OCI-LY7 (cell line): ENCODE measurements at regions of chr7 and their contacts with region 1.

Region 1: DNA sequence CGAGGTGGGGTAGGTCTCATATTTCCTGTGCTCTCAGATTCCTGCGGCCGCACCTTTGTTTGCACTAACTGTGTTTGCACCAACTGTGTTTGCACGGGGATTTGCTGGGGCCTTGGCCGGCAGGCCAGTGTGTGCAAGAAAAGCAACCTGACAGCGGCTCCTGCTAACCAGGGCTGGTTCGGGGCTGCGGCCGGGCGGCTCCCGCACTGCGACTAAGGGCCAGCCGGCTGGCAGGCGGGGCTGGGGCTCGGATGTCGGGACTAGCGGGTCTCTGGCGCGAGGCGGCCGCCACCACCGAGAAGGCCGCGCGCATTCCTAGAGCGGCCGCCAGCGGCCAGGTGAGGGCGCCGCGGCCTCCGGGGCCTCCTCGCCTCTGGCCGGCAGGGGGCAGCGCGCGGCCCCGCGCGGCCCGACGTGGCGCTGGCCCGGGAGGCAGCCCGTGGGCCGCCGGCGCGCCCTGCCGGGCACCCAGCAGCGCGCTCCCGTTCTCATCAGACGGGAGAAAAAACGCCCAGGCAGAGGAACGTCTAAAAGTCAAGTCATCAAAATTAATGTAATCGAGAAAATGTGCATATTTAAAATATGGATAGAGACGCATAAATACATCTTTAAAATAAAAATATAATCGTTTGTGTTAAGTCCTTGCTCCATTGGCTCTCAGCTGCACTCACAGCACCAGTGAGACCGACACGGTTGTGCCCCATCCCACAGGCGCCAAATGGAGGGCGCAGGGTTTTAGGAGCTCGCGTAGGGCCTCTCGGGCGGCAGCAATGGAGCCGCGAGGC is 38.5 kb downstream of the ZNF777 start:
- DNase-seq: peak; percentile 84
- H3K4me3 ChIP-seq: peak overlapping the region; percentile 58
- H3K27ac ChIP-seq: no peak overlapping the region
- H3K4me1 ChIP-seq: peaks cover 5% of the 10 kb centered on the region
- CTCF ChIP-seq: peak; percentile 62

Region 2: GRCh38 chr7:148163246-148163645 is 1259.1 kb before region 1 on chr7:
- CTCF ChIA-PET with region 1: no interaction called
- POLR2A ChIA-PET with region 1: no interaction called
- intact Hi-C with region 1: no loop called
- DNase-seq: no peak
- H3K4me3 ChIP-seq: no peak overlapping the region
- H3K27ac ChIP-seq: no peak overlapping the region
- H3K4me1 ChIP-seq: no peaks in the 10 kb centered on the region
- CTCF ChIP-seq: no peak

Region 3: DNA sequence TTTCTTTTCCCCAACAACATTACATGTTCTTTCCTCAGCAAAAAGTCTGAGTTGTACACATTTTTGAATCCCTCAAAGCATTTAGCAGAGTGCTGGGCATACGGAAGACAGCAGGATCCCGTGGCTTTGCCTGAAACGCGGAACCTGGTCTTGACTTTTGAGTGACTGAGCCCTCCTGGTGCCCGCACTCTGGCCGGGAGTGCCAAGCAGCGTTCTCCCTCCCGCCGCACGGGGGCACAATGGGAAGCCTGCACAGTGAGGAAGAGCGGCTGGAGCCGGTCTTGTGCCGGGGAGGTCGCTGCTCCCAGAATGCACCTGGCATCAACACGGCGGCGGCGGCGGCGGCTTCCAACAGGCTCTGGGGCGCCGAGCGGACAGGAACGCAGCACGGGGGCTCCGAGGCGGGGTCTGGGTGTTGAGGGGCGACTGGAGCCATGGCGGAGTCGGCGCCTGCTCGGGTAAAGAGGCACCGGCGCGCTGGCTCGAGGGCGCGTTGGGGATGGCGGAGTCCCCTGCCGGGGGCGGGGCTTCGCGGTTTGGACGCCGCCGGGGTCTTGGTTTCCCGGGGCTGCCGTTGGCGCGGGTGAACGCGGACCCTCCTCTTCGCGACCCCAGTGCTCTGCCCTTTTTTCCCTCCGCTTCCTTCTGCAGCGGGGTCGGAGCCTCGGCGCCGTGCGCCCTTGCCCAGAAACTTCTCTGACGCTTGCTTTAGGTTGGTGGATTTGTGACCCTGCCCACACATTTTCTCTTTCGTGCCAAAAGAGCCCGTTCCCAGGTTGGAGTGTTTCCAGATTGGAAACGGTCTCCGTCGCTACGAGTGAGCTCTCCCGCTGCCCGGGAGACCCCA is 182.8 kb before region 1 on chr7 and contains the start of gene ZNF212:
- CTCF ChIA-PET with region 1: no interaction called
- POLR2A ChIA-PET with region 1: no interaction called
- intact Hi-C with region 1: loop called (anchors 2 kb)
- DNase-seq: peak; percentile 92
- H3K4me3 ChIP-seq: peak within 1 kb of the TSS; percentile 81
- H3K27ac ChIP-seq: peak within 1 kb of the TSS; percentile 23
- H3K4me1 ChIP-seq: peaks cover 16% of the 10 kb centered on the region
- CTCF ChIP-seq: peak; percentile 84
- total RNA-seq, gene ZNF212: 11.6 and 13.1 TPM in 2 replicates

Region 4: GRCh38 chr7:149460493-149461277 is 38.4 kb after region 1 on chr7 and contains the start of gene ZNF777:
- CTCF ChIA-PET with region 1: no interaction called
- POLR2A ChIA-PET with region 1: no interaction called
- intact Hi-C with region 1: loop called (anchors 1 kb)
- DNase-seq: peak; percentile 87
- H3K4me3 ChIP-seq: peak within 1 kb of the TSS; percentile 71
- H3K27ac ChIP-seq: no peak within 1 kb of the TSS
- H3K4me1 ChIP-seq: peaks cover 17% of the 10 kb centered on the region
- CTCF ChIP-seq: peak; percentile 70
- total RNA-seq, gene ZNF777: 5.2 and 6.2 TPM in 2 replicates

Region 5: DNA sequence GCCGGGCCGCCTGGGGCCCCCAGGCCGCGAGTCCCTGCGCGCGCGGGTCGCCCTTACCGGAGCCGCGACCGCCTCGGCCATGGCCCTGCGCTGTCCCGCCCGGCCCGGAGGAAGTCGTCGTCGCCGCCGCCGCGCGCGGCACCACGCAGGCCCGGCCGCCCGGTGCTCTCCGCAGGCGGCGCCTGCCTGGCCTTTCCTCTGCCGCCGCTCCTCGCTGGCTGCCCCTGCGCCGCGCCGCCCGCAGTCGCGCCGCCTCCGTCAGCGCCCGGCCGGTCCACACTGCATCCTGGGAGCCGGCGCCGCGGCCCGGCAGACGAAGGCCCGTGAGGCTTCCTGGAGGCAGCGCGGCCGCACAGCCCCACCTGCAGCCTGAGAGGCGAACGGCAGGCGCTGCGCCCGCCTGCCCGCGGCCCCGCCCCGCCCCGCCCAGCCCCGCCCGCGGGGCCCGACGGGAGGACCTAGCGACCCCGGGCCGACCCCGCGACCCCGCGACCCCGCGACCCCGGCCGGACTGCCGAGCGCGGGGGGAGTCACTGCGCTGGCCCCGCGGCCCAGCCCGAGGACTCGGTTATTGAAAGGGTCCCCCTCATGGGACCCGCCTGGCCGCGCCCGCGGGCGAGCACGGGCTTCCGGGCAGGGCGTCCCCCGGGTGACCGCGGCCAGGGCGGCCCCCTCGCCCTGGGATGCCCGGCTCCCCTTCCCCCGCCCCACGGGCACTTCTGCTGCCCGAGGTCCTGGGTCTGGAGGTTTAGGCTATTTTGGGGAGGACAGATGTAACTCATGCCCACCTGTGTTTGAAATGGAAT is 75.3 kb after region 1 on chr7 and contains the start of gene ZNF746:
- CTCF ChIA-PET with region 1: no interaction called
- POLR2A ChIA-PET with region 1: no interaction called
- intact Hi-C with region 1: loop called (anchors 1 kb)
- DNase-seq: peak; percentile 91
- H3K4me3 ChIP-seq: peak within 1 kb of the TSS; percentile 100
- H3K27ac ChIP-seq: no peak within 1 kb of the TSS
- H3K4me1 ChIP-seq: peaks cover 16% of the 10 kb centered on the region
- CTCF ChIP-seq: 0 out of 2 replicates have a peak, but pooled peaks have one; percentile 42
- total RNA-seq, gene ZNF746: 14.8 and 17.3 TPM in 2 replicates

Region 6: GRCh38 chr7:149598721-149599306 is 176.5 kb after region 1 on chr7:
- CTCF ChIA-PET with region 1: no interaction called
- POLR2A ChIA-PET with region 1: no interaction called
- intact Hi-C with region 1: loop called (anchors 1 kb)
- DNase-seq: peak; percentile 51
- H3K4me3 ChIP-seq: no peak overlapping the region
- H3K27ac ChIP-seq: peak overlapping the region; percentile 65
- H3K4me1 ChIP-seq: peaks cover 28% of the 10 kb centered on the region
- CTCF ChIP-seq: peak; percentile 73